ENCODE measurements at regions of chr3 and their contacts with region 1.

Region 1: GRCh38 chr3:194592798-194593752 is 40.1 kb downstream of the TMEM44 start:
- DNase-seq: peak; percentile 97
- H3K4me3 Mint-ChIP-seq: peak overlapping the region; percentile 12
- H3K27ac Mint-ChIP-seq: no peak overlapping the region
- H3K4me1 Mint-ChIP-seq: peaks cover 7% of the 10 kb centered on the region
- H3K27me3 Mint-ChIP-seq: no peaks in the 10 kb centered on the region
- CTCF ChIP-seq: no peak

Region 2: GRCh38 chr3:193917158-193917557 is 675.9 kb before region 1 on chr3:
- CTCF ChIA-PET with region 1: no interaction called
- POLR2A ChIA-PET with region 1: no interaction called
- intact Hi-C with region 1: no loop called
- DNase-seq: no peak
- H3K4me3 Mint-ChIP-seq: no peak overlapping the region
- H3K27ac Mint-ChIP-seq: no peak overlapping the region
- H3K4me1 Mint-ChIP-seq: no peaks in the 10 kb centered on the region
- H3K27me3 Mint-ChIP-seq: no peaks in the 10 kb centered on the region
- CTCF ChIP-seq: no peak

Region 3: DNA sequence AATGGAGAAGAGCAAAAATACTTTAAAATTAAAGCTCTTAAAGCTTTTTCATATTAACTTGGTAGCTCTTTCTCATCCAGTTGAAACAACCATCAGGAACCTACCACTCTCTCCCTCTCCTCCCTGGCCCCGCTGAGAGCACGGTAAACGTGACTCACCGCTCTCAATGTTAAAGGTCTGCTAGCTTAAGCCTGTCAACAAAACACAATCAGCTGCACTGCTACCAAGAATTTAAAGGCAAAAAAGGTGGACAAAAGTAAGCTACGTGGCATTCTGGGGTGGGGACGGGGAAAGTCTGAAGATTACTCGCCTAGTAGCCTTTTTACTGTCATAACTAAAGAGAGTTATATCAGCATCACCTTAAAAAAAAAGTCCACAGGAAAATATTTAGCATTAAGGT is 185.7 kb before region 1 on chr3:
- CTCF ChIA-PET with region 1: no interaction called
- POLR2A ChIA-PET with region 1: no interaction called
- intact Hi-C with region 1: no loop called
- DNase-seq: no peak
- H3K4me3 Mint-ChIP-seq: no peak overlapping the region
- H3K27ac Mint-ChIP-seq: no peak overlapping the region
- H3K4me1 Mint-ChIP-seq: no peaks in the 10 kb centered on the region
- H3K27me3 Mint-ChIP-seq: no peaks in the 10 kb centered on the region
- CTCF ChIP-seq: no peak

Region 4: DNA sequence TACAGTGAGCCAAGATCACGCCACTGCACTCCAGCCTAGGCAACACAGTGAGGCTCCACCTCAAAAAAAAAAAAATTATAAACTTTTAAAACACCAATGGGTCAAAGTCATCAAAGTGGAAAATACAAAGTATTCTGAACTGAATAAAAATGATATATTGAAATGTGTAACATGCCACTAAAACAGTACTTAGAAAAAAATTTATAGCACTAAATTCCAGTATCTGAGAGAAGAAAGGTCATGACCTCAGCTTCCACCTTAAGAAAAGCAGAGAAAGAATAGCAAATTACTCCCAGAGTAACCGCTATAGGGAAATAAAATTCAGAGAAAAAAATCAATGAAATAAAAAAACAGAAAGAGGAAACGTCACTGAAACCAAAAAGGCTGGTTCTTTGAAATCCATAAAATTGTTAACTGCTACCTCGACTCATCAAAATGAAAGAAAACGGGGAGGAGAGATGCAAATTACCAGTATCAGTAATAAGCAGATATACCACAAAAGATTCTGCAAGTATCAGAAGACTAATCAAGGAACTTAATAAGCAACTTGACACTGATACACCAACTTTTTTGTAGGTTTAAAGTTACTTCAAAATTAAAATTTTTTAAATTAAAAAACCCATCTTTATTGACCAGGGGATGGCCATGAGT is 127.0 kb before region 1 on chr3:
- CTCF ChIA-PET with region 1: interaction called, 160 read pairs
- POLR2A ChIA-PET with region 1: interaction called, 46 read pairs
- intact Hi-C with region 1: no loop called
- DNase-seq: no peak
- H3K4me3 Mint-ChIP-seq: no peak overlapping the region
- H3K27ac Mint-ChIP-seq: no peak overlapping the region
- H3K4me1 Mint-ChIP-seq: peaks cover 5% of the 10 kb centered on the region
- H3K27me3 Mint-ChIP-seq: no peaks in the 10 kb centered on the region
- CTCF ChIP-seq: no peak

Region 5: DNA sequence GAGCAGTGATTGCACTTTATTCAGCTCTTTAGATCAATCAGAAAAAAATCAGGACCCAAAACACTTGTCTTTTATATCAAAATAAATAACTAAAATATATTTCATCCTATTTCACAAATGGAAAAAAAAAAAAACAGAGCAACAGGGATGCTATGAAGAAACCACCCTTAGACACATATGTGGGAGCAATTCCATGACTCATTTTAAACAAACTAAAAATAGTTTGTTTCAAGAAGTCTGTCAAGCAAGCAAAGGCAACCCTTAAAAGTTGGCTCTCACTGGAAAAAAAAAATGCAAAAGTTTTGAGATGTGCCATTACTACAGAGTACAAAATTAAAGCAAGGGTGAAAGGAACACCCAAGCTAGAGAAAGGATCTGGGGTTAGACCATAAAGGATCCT is 112.0 kb before region 1 on chr3:
- CTCF ChIA-PET with region 1: interaction called, 160 read pairs
- POLR2A ChIA-PET with region 1: interaction called, 25 read pairs
- intact Hi-C with region 1: loop called (anchors 1 kb)
- DNase-seq: peak; percentile 65
- H3K4me3 Mint-ChIP-seq: no peak overlapping the region
- H3K27ac Mint-ChIP-seq: peak overlapping the region; percentile 85
- H3K4me1 Mint-ChIP-seq: peaks cover 27% of the 10 kb centered on the region
- H3K27me3 Mint-ChIP-seq: no peaks in the 10 kb centered on the region
- CTCF ChIP-seq: no peak

Region 6: GRCh38 chr3:194521514-194522260 is 71.4 kb before region 1 on chr3:
- CTCF ChIA-PET with region 1: interaction called, 5 read pairs
- POLR2A ChIA-PET with region 1: interaction called, 6 read pairs
- intact Hi-C with region 1: loop called (anchors 5 kb)
- DNase-seq: peak; percentile 86
- H3K4me3 Mint-ChIP-seq: no peak overlapping the region
- H3K27ac Mint-ChIP-seq: no peak overlapping the region
- H3K4me1 Mint-ChIP-seq: peaks cover 42% of the 10 kb centered on the region
- H3K27me3 Mint-ChIP-seq: no peaks in the 10 kb centered on the region
- CTCF ChIP-seq: no peak

Region 7: DNA sequence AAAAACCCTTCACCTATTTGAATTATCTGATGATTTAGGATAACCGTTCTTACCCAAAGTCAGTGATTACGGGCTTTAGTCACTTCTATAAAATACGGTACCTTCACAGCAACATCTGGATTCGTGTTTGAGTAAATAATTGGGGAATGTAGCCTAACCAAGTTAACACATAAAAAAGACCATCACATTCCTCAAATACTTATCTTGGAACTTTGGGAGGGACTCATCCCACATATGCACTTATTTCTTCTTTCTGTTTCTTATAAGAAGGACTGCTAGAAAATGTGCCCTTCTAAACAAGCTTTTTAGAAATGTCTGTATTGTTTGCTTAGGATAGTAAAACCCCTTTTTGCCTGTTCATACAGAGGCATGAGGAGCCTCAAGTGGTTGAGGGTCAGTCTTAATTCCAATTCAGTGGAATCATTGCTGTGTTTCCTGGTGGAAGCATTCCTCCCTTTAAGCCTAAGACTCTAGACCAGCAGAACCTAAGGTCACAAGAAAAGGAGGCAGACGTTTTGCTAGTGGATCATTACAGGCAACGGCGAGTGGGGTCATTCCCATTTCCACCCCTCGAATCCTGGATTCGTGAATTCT is 27.4 kb before region 1 on chr3:
- CTCF ChIA-PET with region 1: no interaction called
- POLR2A ChIA-PET with region 1: no interaction called
- intact Hi-C with region 1: no loop called
- DNase-seq: no peak
- H3K4me3 Mint-ChIP-seq: no peak overlapping the region
- H3K27ac Mint-ChIP-seq: no peak overlapping the region
- H3K4me1 Mint-ChIP-seq: no peaks in the 10 kb centered on the region
- H3K27me3 Mint-ChIP-seq: no peaks in the 10 kb centered on the region
- CTCF ChIP-seq: no peak

Measured in MCF 10A (cell line).